ENCODE measurements at regions of chr12 and their contacts with region 1.

Region 1: GRCh38 chr12:8108808-8109398 is 14.5 kb upstream of the CLEC4A start:
- ATAC-seq: peak; percentile 42 to 88 (median 68)
- H3K4me3 ChIP-seq: no peak overlapping the region
- H3K27ac ChIP-seq: no peak overlapping the region
- H3K4me1 ChIP-seq: no peaks in the 10 kb centered on the region

Region 2: GRCh38 chr12:7915559-7916403 is 193.1 kb before region 1 on chr12:
- in situ Hi-C with region 1: no loop called
- ATAC-seq: peak in 2 of 8 experiments; percentile 16 to 33
- H3K4me3 ChIP-seq: no peak overlapping the region
- H3K27ac ChIP-seq: no peak overlapping the region
- H3K4me1 ChIP-seq: no peaks in the 10 kb centered on the region

Region 3: GRCh38 chr12:8226355-8226754 is 117.5 kb after region 1 on chr12:
- in situ Hi-C with region 1: loop called in 1 of 9 experiments (anchors 25 kb)
- ATAC-seq: no peak
- H3K4me3 ChIP-seq: no peak overlapping the region
- H3K27ac ChIP-seq: no peak overlapping the region
- H3K4me1 ChIP-seq: no peaks in the 10 kb centered on the region